ENCODE measurements at regions of chr1 and their contacts with region 1.

Region 1: DNA sequence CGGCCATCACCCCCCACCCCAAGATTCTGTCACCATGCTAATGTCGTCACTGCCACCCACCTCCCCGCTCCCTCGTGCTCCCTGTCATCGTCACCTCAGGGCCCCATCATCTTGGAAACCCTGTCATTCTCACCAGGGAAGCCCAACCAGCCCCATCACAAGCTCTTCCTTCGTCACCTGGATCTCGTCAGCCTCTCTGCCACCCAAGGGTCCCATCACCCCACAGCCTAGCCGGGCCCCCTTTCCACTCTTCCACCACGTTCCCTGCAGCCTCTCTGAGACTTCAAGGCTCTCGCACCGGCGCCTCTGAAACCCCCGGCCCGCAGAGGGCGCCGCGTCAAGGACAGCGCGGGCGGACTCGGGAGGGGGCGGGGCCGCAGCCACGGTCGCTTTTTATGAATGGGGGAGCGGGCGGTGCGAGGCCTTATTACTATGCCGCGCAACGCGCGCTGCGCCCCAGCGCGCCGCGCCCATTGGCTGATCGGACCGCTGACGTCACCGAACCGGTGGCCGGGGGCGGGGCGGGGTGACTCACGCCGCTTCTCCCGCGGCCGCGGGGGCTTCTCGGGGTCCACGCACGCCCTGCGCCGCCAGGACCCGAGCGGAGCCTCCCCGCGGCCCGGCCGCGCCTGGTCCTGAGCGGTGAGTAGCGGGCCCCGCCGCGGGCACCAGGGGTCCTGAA is at the start of gene GPR3:
- DNase-seq: peak; percentile 87 to 95 (median 91)
- H3K4me3 ChIP-seq: peak within 1 kb of the TSS; percentile 46
- H3K27ac ChIP-seq: peak within 1 kb of the TSS; percentile 39 to 67
- H3K4me1 ChIP-seq: peaks cover 11% of the 10 kb centered on the region
- H3K27me3 ChIP-seq: no peaks in the 10 kb centered on the region
- CTCF ChIP-seq: peak; percentile 37 to 68 (median 55)
- EP300 ChIP-seq: no peak
- POLR2A ChIP-seq: no peak
- total RNA-seq, gene GPR3: 0.15 to 0.87 (median 0.41) TPM in 6 of 7 donors, not detected in the other

Region 2: GRCh38 chr1:27102707-27103491 is 289.3 kb before region 1 on chr1:
- intact Hi-C with region 1: loop called in 3 of 4 experiments (anchors 10 kb)
- DNase-seq: peak; percentile 66 to 90 (median 82)
- H3K4me3 ChIP-seq: no peak overlapping the region
- H3K27ac ChIP-seq: no peak overlapping the region
- H3K4me1 ChIP-seq: peaks cover 4% of the 10 kb centered on the region
- H3K27me3 ChIP-seq: no peaks in the 10 kb centered on the region
- CTCF ChIP-seq: peak; percentile 84 to 96 (median 93)
- EP300 ChIP-seq: no peak
- POLR2A ChIP-seq: no peak

Region 3: DNA sequence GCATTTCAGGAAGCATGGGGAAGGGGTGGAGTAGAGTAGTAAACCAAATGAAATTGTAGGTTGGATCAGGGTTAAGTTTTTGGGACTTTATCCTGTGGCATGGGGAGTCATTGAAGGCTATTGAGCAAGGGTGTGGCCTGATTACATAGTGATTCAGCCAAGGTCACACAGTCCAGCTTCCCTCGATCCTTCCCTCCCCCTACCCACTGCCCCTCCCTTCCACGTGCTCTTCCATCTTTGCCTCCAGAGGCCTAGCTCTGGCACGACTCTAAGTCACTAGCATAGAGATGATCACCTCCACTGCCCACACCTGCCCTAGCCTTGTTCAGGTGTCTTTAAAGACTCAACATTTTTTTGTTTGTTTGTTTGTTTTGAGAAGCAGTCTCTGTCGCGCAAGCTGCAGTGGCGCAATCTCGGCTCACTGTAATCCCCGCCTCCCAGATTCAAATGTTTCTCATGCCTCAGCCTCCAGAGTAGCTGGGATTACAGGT is 200.2 kb before region 1 on chr1:
- intact Hi-C with region 1: no loop called
- DNase-seq: no peak
- H3K4me3 ChIP-seq: no peak overlapping the region
- H3K27ac ChIP-seq: no peak overlapping the region
- H3K4me1 ChIP-seq: no peaks in the 10 kb centered on the region
- H3K27me3 ChIP-seq: no peaks in the 10 kb centered on the region
- CTCF ChIP-seq: no peak
- EP300 ChIP-seq: no peak
- POLR2A ChIP-seq: no peak

Region 4: DNA sequence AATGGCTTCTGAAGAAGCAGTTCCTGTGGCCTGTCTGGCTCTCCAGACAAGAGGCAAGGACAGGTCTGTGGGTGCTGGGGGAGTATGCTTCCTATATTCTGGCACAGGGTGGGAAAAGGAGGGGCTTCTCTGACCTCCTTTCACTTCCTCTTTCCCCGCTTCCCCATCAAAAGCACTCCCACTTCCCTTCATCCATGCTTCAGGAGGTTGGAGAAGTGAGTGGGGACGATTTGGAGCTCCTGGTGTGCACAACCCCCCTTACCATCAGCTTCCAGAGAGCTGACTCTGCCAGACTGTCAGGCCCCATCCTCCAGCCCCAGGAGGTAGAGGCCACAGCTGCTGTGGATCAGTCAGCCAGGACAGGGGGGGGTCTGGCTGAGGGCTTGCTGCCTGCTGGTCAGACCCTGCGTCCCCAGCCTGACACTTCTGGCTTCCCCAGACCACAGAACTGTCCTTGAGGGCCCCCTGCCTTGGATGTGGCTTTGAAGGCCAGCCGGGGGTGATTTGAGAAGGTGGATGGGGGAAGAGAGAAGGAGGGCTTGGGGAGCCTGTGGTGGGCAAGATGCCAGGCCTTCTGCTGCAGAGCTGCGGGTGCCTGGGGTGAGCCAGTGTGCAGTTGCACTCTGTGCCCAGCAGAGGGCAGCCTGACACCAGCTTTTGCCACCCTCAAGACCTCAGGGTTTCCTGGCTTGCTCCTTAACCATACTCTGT is 91.7 kb before region 1 on chr1:
- intact Hi-C with region 1: loop called (anchors 2 to 5 kb)
- DNase-seq: peak; percentile 88 to 93 (median 89)
- H3K4me3 ChIP-seq: no peak overlapping the region
- H3K27ac ChIP-seq: peak overlapping the region; percentile 13 to 41
- H3K4me1 ChIP-seq: no peaks in the 10 kb centered on the region
- H3K27me3 ChIP-seq: no peaks in the 10 kb centered on the region
- CTCF ChIP-seq: peak; percentile 97 to 99 (median 98)
- EP300 ChIP-seq: no peak
- POLR2A ChIP-seq: peak; percentile 23

Region 5: GRCh38 chr1:27357281-27358037 is 34.8 kb before region 1 on chr1:
- intact Hi-C with region 1: loop called (anchors 2 to 5 kb)
- DNase-seq: peak; percentile 65 to 83 (median 78)
- H3K4me3 ChIP-seq: no peak overlapping the region
- H3K27ac ChIP-seq: no peak overlapping the region
- H3K4me1 ChIP-seq: peaks cover 3% of the 10 kb centered on the region
- H3K27me3 ChIP-seq: no peaks in the 10 kb centered on the region
- CTCF ChIP-seq: peak; percentile 91 to 99 (median 95)
- EP300 ChIP-seq: no peak
- POLR2A ChIP-seq: no peak

Region 6: GRCh38 chr1:27804791-27805190 is 412.6 kb after region 1 on chr1:
- intact Hi-C with region 1: no loop called
- DNase-seq: no peak
- H3K4me3 ChIP-seq: no peak overlapping the region
- H3K27ac ChIP-seq: no peak overlapping the region
- H3K4me1 ChIP-seq: no peaks in the 10 kb centered on the region
- H3K27me3 ChIP-seq: no peaks in the 10 kb centered on the region
- CTCF ChIP-seq: no peak
- EP300 ChIP-seq: no peak
- POLR2A ChIP-seq: no peak

Measured in ovary (tissue), 10 donors.